Endothelial cell of umbilical vein (primary cell): ENCODE measurements at regions of chr9 and their contacts with region 1.

Region 1: DNA sequence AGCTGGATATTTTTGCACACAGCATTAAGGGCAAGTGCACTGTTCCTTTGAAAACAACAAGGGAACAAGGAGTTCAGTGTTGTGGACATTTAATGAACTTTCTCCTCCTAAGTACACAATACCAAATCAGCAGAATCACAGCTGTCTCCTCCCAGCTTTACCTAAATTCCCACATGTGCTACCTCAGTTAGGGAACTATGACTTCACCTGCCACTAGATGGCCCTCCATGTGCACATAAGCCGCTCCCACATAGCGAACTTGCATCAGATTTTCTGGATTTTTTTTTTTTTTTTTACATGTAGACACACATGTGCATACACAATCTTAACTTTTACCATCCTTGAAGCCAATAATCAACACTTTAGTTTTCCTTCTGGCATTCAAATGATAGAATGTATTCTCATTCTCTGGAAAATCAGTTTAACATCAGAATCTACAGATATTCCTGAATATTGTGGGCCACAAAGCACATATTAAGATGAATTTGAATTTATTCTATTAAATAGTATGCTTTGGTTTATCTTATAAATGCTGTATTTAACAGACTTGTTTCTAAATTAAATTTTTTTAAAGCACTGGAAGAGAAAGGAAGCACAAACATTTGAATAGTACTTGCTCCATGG is 123.6 kb downstream of the PALM2AKAP2 start:
- DNase-seq: peak; percentile 82
- H3K4me3 ChIP-seq: no peak overlapping the region
- H3K27ac ChIP-seq: no peak overlapping the region
- H3K4me1 ChIP-seq: peaks cover 24% of the 10 kb centered on the region
- H3K27me3 ChIP-seq: peaks cover 8 to 9% of the 10 kb centered on the region in 2 experiments
- CTCF ChIP-seq: peak; percentile 62 to 82
- POLR2A ChIP-seq: no peak

Region 2: GRCh38 chr9:109969011-109969410 is 65.4 kb after region 1 on chr9:
- CTCF ChIA-PET with region 1: interaction called, 8 read pairs
- POLR2A ChIA-PET with region 1: no interaction called
- dilution Hi-C with region 1: no loop called
- intact Hi-C with region 1: loop called (anchors 1 kb)
- DNase-seq: peak; percentile 72
- H3K4me3 ChIP-seq: no peak overlapping the region
- H3K27ac ChIP-seq: peak overlapping the region; percentile 91
- H3K4me1 ChIP-seq: peaks cover 27% of the 10 kb centered on the region
- H3K27me3 ChIP-seq: no peaks in the 10 kb centered on the region
- CTCF ChIP-seq: peak; percentile 16 to 31
- POLR2A ChIP-seq: no peak

Region 3: GRCh38 chr9:110029429-110029955 is 125.9 kb after region 1 on chr9:
- CTCF ChIA-PET with region 1: interaction called, 25 read pairs
- POLR2A ChIA-PET with region 1: interaction called, 8 read pairs
- dilution Hi-C with region 1: no loop called
- intact Hi-C with region 1: loop called (anchors 1 kb)
- DNase-seq: peak; percentile 91
- H3K4me3 ChIP-seq: peak overlapping the region in 1 of 3 experiments; percentile 1
- H3K27ac ChIP-seq: peak overlapping the region; percentile 97
- H3K4me1 ChIP-seq: peaks cover 57% of the 10 kb centered on the region
- H3K27me3 ChIP-seq: no peaks in the 10 kb centered on the region
- CTCF ChIP-seq: no peak
- POLR2A ChIP-seq: peak; percentile 63

Region 4: DNA sequence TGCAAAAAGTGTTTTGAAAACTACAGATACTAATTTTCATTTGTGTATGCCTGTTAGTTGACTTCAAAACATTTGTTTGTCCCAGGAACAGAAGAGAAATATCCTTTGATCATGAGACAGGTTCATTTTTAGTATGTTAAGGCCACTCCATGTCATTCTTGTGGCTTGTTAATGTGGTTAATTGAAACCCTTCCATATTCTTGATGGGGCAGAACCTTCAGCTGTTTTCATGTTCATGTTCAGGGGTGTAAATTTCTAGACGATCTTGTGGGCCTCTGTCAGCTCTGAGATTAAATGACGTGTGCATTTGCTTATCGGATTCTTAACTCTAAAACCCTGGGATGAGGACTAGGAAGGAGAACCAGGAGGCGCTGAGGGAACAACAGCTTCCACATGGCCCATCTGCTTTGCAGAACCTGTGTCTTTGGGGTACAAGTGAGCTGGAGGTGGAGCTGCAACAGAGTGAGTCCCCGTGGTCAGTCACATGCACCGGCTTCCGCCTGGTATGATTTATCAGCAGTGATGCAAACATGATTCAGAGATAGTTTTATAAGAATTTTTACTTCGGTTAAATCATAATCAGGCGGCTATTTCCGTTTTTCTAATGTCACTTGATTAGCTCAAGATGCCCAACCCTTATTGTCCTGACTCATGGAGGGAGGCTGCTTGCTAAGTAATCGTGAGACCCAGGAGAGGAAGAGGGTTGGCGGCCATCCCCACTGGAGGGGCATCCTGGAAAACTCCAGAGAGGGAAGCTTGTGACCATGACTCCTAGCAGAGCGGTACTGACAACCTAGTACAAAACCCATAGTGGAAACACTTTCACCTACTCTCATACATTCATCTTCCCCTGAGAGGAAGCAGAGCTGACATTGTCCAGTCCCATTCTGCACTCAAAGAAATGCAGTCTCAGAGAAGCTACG is 166.0 kb after region 1 on chr9:
- CTCF ChIA-PET with region 1: interaction called, 19 read pairs
- POLR2A ChIA-PET with region 1: interaction called, 4 read pairs
- dilution Hi-C with region 1: loop called (anchors 10 kb)
- intact Hi-C with region 1: no loop called
- DNase-seq: peak; percentile 93
- H3K4me3 ChIP-seq: no peak overlapping the region
- H3K27ac ChIP-seq: peak overlapping the region; percentile 91
- H3K4me1 ChIP-seq: peaks cover 70% of the 10 kb centered on the region
- H3K27me3 ChIP-seq: no peaks in the 10 kb centered on the region
- CTCF ChIP-seq: no peak
- POLR2A ChIP-seq: no peak

Region 5: DNA sequence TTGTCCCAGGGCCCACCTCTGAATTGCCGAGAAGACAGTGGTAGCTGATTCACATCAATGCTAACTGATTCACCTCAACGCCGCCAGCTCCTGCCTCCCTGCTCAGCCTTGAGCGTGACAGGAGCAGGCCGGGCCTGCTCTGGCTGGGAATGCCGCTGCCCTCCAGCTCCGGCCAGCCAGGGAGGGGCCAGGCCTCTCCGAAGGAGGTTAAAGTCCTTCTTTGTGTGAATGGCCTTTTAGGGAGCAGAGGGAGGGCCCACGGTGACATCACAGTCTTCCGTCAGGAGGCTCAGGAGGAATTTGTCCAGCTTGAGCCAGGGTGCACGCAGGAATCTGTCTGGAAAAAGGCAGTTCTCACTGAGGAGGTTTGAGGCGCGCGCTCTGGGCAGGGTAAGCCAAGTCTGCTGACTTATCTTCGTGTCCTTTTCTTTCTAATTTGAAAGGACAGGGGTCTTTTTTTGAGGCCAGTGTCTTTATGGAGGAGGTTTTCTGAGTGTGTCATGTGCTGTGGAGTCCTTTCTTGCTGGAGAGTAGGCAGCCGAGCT is 221.7 kb after region 1 on chr9:
- CTCF ChIA-PET with region 1: interaction called, 21 read pairs
- POLR2A ChIA-PET with region 1: interaction called, 7 read pairs
- dilution Hi-C with region 1: no loop called
- intact Hi-C with region 1: loop called (anchors 1 kb)
- DNase-seq: peak; percentile 81
- H3K4me3 ChIP-seq: no peak overlapping the region
- H3K27ac ChIP-seq: peak overlapping the region; percentile 79
- H3K4me1 ChIP-seq: peaks cover 60% of the 10 kb centered on the region
- H3K27me3 ChIP-seq: no peaks in the 10 kb centered on the region
- CTCF ChIP-seq: no peak
- POLR2A ChIP-seq: no peak

Region 6: DNA sequence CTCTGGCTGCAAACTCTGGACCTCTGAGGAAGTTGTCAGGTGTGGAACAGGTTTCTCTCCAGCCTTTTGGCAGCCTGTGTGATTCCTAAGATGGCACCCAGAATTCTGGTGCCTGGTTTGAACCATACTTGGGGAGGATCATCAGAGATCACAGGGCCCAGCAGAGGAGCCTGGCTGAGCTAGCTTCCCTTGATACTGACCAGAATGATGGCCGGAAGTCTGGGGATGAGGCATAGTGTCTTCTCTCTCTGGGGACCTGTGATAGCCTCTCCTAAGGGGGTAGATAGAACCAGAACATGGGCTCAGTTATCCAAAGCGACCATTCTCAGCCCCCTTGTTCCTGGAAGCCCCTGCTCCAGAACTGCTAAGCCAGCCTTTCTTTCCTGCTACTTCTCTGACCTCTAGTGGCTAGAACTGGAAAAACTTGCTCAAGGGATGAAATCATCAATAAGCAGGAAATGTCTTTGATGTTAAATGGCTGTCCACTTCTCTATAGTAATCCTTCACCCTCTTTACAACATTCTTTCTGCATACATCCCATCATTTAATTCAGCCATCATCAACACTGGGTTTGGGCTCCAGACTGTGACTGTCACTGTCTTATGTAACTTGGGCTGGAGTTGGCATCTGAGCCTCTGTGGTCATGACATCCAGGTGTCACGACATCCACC is 249.2 kb after region 1 on chr9:
- CTCF ChIA-PET with region 1: interaction called, 117 read pairs
- POLR2A ChIA-PET with region 1: no interaction called
- dilution Hi-C with region 1: loop called (anchors 25 kb)
- intact Hi-C with region 1: loop called (anchors 1 kb)
- DNase-seq: peak; percentile 84
- H3K4me3 ChIP-seq: no peak overlapping the region
- H3K27ac ChIP-seq: peak overlapping the region; percentile 36
- H3K4me1 ChIP-seq: peaks cover 13% of the 10 kb centered on the region
- H3K27me3 ChIP-seq: no peaks in the 10 kb centered on the region
- CTCF ChIP-seq: peak; percentile 63 to 65
- POLR2A ChIP-seq: no peak